ENCODE measurements at regions of chr6 and their contacts with region 1.

Region 1: GRCh38 chr6:135535989-135536414 is 38.5 kb upstream of the AHI1 start:
- DNase-seq: peak; percentile 15
- H3K4me3 Mint-ChIP-seq: peak overlapping the region; percentile 55
- H3K27ac Mint-ChIP-seq: peak overlapping the region; percentile 77
- H3K4me1 Mint-ChIP-seq: peaks cover 53% of the 10 kb centered on the region
- H3K27me3 Mint-ChIP-seq: no peaks in the 10 kb centered on the region

Region 2: DNA sequence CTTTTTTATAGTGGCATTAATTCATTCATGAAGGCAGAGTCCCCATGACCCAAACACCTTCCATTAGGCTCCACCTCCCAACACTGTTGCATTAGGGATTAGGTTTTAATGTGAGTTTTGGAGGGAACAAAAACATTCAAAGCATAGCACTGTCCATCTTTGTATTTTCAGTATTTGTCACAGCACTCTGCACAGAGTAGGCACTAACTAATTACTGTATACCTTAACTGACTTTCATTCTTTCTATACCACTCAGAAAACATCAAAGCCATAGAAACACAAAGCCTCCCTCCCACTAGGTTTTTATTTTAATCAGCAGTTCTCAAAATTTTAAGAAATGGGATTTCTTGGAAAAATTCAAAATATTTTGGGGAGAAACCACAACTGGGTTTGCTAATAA is 16.7 kb before region 1 on chr6:
- intact Hi-C with region 1: loop called (anchors 1 kb)
- DNase-seq: no peak
- H3K4me3 Mint-ChIP-seq: no peak overlapping the region
- H3K27ac Mint-ChIP-seq: no peak overlapping the region
- H3K4me1 Mint-ChIP-seq: peaks cover 29% of the 10 kb centered on the region
- H3K27me3 Mint-ChIP-seq: no peaks in the 10 kb centered on the region

Region 3: DNA sequence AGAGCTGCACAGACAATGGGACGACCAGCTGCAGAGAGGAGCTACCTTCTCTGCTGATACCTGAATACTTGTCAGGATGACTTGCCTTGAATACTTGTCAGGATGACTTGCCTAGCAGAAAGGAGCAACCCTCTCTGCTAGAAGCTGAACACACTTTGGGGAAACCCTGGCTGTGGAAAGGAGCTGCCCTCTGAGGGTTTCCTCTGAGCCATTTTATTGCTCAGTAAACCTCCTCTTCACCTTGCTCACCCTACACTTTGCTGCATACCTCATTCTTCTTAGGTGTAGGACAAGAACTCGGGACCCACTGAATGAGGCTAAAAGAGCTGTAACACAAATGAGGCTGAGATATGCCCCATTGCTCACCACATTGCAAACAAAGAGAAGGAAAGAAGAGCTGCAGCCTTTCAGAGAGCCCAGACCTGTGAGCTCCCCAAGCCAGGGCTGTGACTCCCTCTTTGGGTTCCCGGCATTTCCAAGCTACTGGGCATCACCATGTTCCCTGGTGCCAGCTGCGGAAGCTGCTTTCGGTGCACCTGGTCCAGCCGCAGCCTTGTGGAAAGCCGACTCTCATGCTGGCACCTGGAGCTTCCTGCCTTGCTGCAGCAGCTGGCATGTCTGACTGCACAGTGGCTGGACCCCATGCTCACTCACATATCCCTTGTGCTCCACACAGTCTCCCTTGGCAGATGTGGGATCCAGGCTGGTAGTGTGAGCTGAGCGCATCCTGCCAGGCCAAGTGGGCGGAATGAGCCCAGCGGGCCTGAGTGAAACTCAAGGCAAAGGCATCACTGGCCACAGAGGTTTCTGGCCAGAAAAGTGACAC is 68.2 kb after region 1 on chr6:
- intact Hi-C with region 1: loop called (anchors 1 kb)
- DNase-seq: no peak
- H3K4me3 Mint-ChIP-seq: no peak overlapping the region
- H3K27ac Mint-ChIP-seq: peak overlapping the region; percentile 90
- H3K4me1 Mint-ChIP-seq: peaks cover 46% of the 10 kb centered on the region
- H3K27me3 Mint-ChIP-seq: no peaks in the 10 kb centered on the region

Region 4: GRCh38 chr6:135675862-135676261 is 139.9 kb after region 1 on chr6:
- intact Hi-C with region 1: loop called (anchors 1 kb)
- DNase-seq: peak; percentile 12
- H3K4me3 Mint-ChIP-seq: no peak overlapping the region
- H3K27ac Mint-ChIP-seq: peak overlapping the region; percentile 62
- H3K4me1 Mint-ChIP-seq: peaks cover 49% of the 10 kb centered on the region
- H3K27me3 Mint-ChIP-seq: no peaks in the 10 kb centered on the region

Region 5: GRCh38 chr6:135909737-135910387 is 373.9 kb after region 1 on chr6:
- intact Hi-C with region 1: loop called (anchors 1 kb)
- DNase-seq: peak; percentile 49
- H3K4me3 Mint-ChIP-seq: no peak overlapping the region
- H3K27ac Mint-ChIP-seq: peak overlapping the region; percentile 24
- H3K4me1 Mint-ChIP-seq: peaks cover 30% of the 10 kb centered on the region
- H3K27me3 Mint-ChIP-seq: no peaks in the 10 kb centered on the region